Prostate gland (tissue), 2 donors: ENCODE measurements at regions of chrX and their contacts with region 1.

Region 1: DNA sequence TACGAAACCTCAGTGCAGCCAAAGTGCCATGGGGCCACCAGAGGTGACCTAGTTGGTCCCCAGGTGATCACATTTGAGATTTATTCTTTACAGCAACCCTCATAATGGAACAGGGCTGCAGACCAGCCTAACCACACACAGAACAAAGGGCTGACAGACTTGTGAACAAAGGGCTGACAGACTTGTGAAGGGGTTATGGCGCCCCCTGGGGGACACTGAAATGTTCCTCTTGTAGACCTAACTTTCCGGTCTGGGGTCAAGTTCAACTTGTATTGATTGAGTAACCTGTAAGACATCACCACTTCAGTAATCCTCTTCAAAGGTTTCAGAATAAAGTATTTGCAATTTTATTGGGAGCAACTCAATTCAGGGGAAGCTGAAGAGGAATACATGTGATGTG is 175.9 kb upstream of the RPS6KA3 start:
- DNase-seq: peak; percentile 63
- H3K4me3 ChIP-seq: no peak overlapping the region
- H3K27ac ChIP-seq: no peak overlapping the region
- H3K4me1 ChIP-seq: no peaks in the 10 kb centered on the region
- H3K27me3 ChIP-seq: no peaks in the 10 kb centered on the region
- CTCF ChIP-seq: peak in 3 of 4 experiments; percentile 51 to 66 (median 57)
- POLR2A ChIP-seq: no peak

Region 2: DNA sequence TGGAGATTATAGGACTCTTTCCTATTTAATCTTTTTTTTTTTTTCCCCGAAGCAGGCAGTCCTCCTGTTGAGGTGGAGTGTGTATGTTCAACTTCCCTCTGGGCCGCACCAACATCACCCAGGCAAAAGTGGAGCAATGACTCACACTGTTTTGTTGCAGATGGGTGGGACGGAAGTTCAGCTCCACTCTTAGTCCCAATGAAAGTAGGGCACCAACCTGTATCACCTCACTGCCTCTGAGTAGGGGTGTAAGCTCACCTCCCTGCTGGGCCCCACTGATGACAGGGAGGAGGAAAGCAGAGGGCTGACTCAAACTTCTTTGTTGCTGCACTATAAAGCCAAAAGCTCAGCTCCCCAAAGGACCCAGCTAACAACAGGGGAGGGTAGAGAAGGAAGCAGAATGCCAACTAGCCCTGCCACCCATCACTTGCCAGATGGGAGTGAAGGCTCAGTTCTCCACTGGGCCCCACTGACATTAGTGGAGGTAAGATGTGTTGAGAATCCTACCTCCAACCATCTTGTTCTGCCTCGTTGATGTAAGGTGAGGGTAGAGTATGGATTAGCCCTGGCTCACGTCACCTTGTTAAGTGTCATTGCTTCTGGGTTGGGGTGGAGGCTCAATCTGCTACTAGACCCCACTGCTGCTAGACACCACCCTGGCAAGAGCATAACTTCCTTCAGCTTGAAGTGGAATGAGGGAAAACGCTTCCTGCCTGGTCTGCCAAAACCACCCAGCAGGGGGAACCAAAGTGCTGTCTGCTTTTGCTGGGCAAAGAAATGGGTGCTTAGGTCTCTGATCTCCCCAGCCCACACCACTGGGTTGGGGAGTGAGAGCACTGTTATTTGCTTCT is 190.0 kb before region 1 on chrX:
- intact Hi-C with region 1: loop called (anchors 2 kb)
- DNase-seq: peak; percentile 23
- H3K4me3 ChIP-seq: no peak overlapping the region
- H3K27ac ChIP-seq: no peak overlapping the region
- H3K4me1 ChIP-seq: no peaks in the 10 kb centered on the region
- H3K27me3 ChIP-seq: no peaks in the 10 kb centered on the region
- CTCF ChIP-seq: peak in 3 of 4 experiments; percentile 44 to 52 (median 46)
- POLR2A ChIP-seq: no peak

Region 3: DNA sequence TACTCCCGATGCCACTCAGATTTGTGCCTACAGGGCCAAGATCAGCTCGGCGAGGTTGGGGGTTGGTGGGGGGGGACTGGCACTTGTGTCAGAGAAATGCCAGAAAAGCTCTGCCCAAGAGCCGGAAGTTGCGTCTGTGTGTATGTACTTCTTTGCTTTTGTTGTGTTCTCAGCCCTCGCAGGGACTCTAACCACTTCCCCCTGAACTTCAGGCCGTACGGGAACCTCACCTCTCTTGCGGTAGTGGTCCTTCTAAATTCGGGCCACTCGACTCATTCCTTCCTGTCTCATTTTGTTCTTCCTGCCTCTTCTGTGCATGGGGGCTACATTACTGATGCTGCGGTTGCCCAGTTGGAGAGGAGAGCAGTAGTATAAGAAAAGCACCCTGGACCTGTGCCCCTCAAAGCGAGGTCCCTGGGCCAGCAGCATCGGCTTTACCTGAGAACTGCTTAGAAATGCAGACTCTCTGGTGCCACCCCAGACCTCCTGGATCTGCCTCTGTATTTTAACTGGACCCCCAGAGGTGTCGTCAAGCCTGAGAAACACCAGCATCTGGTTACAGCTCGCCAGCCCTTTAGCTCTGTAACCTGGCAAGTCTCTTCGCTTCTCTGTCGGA is 29.6 kb before region 1 on chrX:
- intact Hi-C with region 1: no loop called
- DNase-seq: no peak
- H3K4me3 ChIP-seq: no peak overlapping the region
- H3K27ac ChIP-seq: no peak overlapping the region
- H3K4me1 ChIP-seq: no peaks in the 10 kb centered on the region
- H3K27me3 ChIP-seq: no peaks in the 10 kb centered on the region
- CTCF ChIP-seq: no peak
- POLR2A ChIP-seq: no peak